MCF 10A (cell line): ENCODE measurements at regions of chr5 and their contacts with region 1.

Region 1: DNA sequence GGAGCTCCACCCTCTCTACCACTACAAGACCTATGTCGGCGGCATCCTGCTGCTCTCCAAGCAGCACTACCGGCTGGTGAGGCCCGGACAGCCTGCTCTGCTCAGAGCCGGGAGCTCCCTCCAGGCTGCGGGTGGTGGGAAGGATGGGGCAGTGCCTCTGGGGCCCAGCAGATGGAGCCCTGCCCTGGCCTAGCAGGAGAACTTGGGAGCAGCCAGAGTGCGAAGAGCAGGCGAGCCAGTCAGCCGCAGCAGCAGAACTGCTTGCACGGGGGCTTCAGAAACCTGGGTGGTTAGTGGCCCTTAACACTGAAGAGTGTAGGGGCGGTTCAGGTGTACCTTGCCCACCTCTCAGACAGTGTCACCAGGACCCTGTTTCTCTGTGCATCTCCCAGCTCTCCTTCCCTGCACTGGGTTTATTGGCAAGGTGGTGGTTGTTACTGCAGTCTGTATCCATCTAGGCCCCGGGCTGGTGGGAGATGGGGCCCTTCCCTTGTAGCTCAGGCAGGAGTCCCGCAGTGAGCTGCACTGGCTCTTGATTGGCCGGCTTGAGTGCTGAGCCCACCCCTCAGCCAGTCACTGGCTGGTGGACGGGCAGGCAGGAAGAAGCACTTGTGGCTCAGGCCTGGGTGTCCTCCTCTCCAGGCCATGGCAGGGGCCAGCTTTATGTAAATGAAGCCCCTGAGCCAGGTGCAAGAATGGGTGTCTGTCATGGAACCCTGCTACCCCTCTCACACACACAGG is 7.7 kb downstream of the B4GALT7 start:
- DNase-seq: peak; percentile 82
- H3K4me3 Mint-ChIP-seq: no peak overlapping the region
- H3K27ac Mint-ChIP-seq: no peak overlapping the region
- H3K4me1 Mint-ChIP-seq: peaks cover 5% of the 10 kb centered on the region
- H3K27me3 Mint-ChIP-seq: no peaks in the 10 kb centered on the region
- CTCF ChIP-seq: peak; percentile 97

Region 2: DNA sequence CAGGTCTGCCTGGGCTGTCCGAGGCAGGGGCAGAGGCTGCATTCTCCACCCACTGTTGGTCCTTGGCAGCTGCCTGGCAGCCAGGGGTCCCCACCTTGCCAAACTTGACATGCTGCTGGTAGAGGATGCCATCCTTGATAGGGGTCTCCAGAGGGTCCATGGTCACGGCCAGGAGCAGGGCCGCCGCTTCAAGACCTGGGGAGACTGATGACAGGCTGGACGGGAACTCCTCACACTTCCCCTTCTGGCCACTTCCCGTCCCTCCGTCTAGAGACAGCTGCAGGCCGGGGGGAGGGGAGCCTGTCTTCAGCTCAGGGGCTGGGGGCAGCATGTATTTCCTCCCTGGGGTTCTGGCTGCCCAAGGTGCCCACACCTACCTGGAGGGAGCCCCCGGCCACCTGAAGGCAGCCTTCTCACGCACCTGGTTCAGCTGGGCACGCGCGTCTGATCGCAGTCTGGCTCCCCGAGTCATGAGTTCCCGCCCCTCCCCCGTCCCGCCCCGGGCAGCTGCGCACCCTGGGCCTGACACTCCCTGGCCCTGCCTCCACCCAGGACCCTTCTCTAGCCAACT is 98.2 kb before region 1 on chr5 and contains the start of gene DOK3:
- CTCF ChIA-PET with region 1: no interaction called
- POLR2A ChIA-PET with region 1: no interaction called
- intact Hi-C with region 1: no loop called
- DNase-seq: no peak
- H3K4me3 Mint-ChIP-seq: no peak within 1 kb of the TSS
- H3K27ac Mint-ChIP-seq: no peak within 1 kb of the TSS
- H3K4me1 Mint-ChIP-seq: peaks cover 8% of the 10 kb centered on the region
- H3K27me3 Mint-ChIP-seq: no peaks in the 10 kb centered on the region
- CTCF ChIP-seq: no peak
- total RNA-seq, gene DOK3: 5.4 and 6.0 TPM in 2 replicates

Region 3: GRCh38 chr5:177592010-177592834 is 15.4 kb before region 1 on chr5 and contains the start of gene TMED9:
- CTCF ChIA-PET with region 1: interaction called, 9 read pairs
- POLR2A ChIA-PET with region 1: interaction called, 24 read pairs
- intact Hi-C with region 1: no loop called
- DNase-seq: peak; percentile 86
- H3K4me3 Mint-ChIP-seq: peak within 1 kb of the TSS; percentile 85
- H3K27ac Mint-ChIP-seq: peak within 1 kb of the TSS; percentile 96
- H3K4me1 Mint-ChIP-seq: peaks cover 7% of the 10 kb centered on the region
- H3K27me3 Mint-ChIP-seq: peaks cover 36% of the 10 kb centered on the region
- CTCF ChIP-seq: no peak
- total RNA-seq, gene TMED9: 301 and 365 TPM in 2 replicates

Region 4: DNA sequence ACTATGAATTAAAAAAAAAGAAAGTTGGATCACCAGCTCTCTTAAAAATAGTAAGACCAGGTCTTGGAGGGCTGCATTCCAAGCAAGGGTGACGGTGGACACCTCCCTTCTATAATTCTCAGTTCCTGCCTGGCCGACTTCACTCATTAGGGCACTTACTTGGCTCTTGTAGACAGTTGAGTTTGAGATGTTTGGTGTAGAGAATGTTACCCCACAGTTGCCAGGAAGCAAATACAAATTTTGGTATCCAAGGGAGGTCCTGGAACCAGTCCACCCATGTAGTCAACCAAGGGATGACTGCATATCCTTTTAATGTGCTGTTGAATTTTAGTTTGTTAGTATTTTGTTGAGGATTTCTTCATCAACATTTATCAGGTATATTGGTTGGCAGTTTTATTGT is 12.9 kb after region 1 on chr5:
- CTCF ChIA-PET with region 1: interaction called, 22 read pairs
- POLR2A ChIA-PET with region 1: no interaction called
- intact Hi-C with region 1: no loop called
- DNase-seq: no peak
- H3K4me3 Mint-ChIP-seq: no peak overlapping the region
- H3K27ac Mint-ChIP-seq: no peak overlapping the region
- H3K4me1 Mint-ChIP-seq: no peaks in the 10 kb centered on the region
- H3K27me3 Mint-ChIP-seq: no peaks in the 10 kb centered on the region
- CTCF ChIP-seq: no peak

Region 5: DNA sequence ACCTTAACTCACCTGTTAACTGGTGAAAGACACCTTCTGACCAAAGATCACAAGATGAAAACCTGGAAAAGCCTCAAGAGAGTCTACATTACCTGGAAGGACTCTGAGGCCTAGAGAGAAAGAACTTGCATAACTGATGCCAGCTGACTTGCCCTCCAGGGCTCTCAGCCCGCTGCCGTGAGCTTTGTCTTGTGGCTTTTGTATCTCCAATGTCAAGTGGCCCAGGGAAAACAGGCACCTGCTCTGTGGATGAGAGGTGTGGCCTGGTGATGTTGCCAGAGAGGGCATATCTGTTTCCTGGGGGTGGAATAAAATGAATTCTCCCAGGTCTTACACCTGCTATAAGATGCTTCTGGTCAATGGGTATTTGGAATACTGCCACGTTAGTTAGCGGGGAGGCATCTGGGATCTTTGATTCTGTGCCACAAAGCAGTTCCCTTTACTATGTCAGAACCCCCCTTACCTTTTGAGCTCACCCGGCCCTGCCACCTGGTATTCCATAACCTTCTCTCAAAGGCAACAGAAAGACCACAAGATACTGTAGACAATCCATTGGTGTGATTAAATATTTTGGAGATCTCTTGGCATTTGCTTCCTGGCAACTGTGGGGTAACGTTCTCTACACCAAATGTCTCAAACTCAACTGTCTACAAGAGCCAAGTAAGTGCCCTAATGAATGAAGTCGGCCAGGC is 450.8 kb after region 1 on chr5:
- CTCF ChIA-PET with region 1: interaction called, 15 read pairs
- POLR2A ChIA-PET with region 1: no interaction called
- intact Hi-C with region 1: no loop called
- DNase-seq: no peak
- H3K4me3 Mint-ChIP-seq: no peak overlapping the region
- H3K27ac Mint-ChIP-seq: no peak overlapping the region
- H3K4me1 Mint-ChIP-seq: no peaks in the 10 kb centered on the region
- H3K27me3 Mint-ChIP-seq: peaks cover 19% of the 10 kb centered on the region
- CTCF ChIP-seq: no peak

Region 6: GRCh38 chr5:178069909-178070308 is 462.3 kb after region 1 on chr5:
- CTCF ChIA-PET with region 1: no interaction called
- POLR2A ChIA-PET with region 1: no interaction called
- intact Hi-C with region 1: loop called (anchors 5 kb)
- DNase-seq: peak; percentile 61
- H3K4me3 Mint-ChIP-seq: no peak overlapping the region
- H3K27ac Mint-ChIP-seq: no peak overlapping the region
- H3K4me1 Mint-ChIP-seq: no peaks in the 10 kb centered on the region
- H3K27me3 Mint-ChIP-seq: peaks cover 13% of the 10 kb centered on the region
- CTCF ChIP-seq: peak; percentile 35